ENCODE measurements at regions of chr10 and their contacts with region 1.

Region 1: GRCh38 chr10:132637477-132638129 is 100.0 kb downstream of the INPP5A start:
- DNase-seq: peak; percentile 5 to 21
- ATAC-seq: peak; percentile 63 to 85 (median 70)
- H3K4me3 ChIP-seq: no peak overlapping the region
- H3K27ac ChIP-seq: no peak overlapping the region
- H3K4me1 ChIP-seq: peaks cover 30% of the 10 kb centered on the region
- H3K27me3 ChIP-seq: no peaks in the 10 kb centered on the region
- CTCF ChIP-seq: peak; percentile 74

Region 2: DNA sequence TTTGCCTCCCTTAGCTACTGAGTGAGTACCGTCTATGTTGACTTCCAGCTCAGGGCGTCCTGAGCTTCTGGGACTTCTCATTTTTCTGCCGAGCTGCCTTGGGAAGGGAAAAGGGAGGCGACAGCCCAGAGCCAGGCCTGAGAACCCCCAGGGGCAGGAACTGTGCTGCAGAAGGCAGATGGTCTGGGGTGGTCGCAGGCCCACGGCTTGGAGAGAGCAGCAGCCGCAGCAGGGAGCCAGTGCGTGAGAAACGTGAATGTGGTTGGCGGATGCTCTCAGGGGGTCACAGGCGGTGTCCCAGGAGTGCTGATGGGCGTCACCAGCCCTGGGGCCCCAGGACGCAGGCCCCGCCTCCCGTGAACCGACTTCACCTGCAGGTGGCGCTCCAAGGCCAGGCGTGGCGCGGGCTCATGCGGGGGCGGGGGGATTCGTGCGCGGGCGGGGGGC is 249.8 kb before region 1 on chr10:
- intact Hi-C with region 1: loop called (anchors 5 to 10 kb)
- DNase-seq: peak; percentile 75 to 85
- ATAC-seq: peak; percentile 52 to 86 (median 74)
- H3K4me3 ChIP-seq: no peak overlapping the region
- H3K27ac ChIP-seq: no peak overlapping the region
- H3K4me1 ChIP-seq: peaks cover 5% of the 10 kb centered on the region
- H3K27me3 ChIP-seq: no peaks in the 10 kb centered on the region
- CTCF ChIP-seq: peak; percentile 64

Region 3: DNA sequence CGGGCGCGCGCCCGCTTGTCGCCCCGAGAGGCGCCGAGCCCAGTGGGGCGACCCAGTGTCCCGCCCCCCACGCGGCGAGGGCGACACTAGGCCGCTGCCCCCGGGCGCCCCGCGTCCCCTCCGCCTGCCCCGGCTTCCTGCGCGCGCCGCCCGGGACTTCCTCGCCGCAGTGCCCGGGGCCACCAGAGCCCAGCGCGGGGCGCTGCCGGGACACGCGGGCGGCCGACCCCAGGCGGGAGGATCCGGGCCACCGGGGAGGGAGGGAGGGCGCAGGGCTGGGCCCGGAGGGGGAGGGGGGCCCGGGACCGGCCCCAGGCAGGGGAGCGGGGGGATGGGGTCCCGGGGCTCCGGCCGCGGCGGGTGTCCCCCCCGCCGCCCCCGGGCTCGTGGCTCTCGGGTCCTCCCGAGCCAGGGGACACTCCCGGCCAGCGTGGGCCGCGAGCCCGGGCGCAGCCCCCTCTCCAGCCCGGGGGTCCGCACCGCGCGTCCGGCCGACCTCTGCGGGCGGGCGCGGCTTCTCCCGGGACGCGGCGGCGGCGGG is 241.0 kb before region 1 on chr10:
- intact Hi-C with region 1: loop called (anchors 5 to 10 kb)
- DNase-seq: peak; percentile 81 to 89
- ATAC-seq: peak; percentile 59 to 68 (median 66)
- H3K4me3 ChIP-seq: peak overlapping the region; percentile 75
- H3K27ac ChIP-seq: peak overlapping the region; percentile 91
- H3K4me1 ChIP-seq: peaks cover 45% of the 10 kb centered on the region
- H3K27me3 ChIP-seq: no peaks in the 10 kb centered on the region
- CTCF ChIP-seq: peak; percentile 38

Region 4: GRCh38 chr10:132458593-132459300 is 178.9 kb before region 1 on chr10:
- intact Hi-C with region 1: loop called (anchors 1 to 2 kb)
- DNase-seq: peak; percentile 62 to 81
- ATAC-seq: peak; percentile 78 to 86 (median 80)
- H3K4me3 ChIP-seq: no peak overlapping the region
- H3K27ac ChIP-seq: no peak overlapping the region
- H3K4me1 ChIP-seq: peaks cover 10% of the 10 kb centered on the region
- H3K27me3 ChIP-seq: peaks cover 0 to 4% (median 0%) of the 10 kb centered on the region in 3 donors
- CTCF ChIP-seq: peak; percentile 93

Region 5: DNA sequence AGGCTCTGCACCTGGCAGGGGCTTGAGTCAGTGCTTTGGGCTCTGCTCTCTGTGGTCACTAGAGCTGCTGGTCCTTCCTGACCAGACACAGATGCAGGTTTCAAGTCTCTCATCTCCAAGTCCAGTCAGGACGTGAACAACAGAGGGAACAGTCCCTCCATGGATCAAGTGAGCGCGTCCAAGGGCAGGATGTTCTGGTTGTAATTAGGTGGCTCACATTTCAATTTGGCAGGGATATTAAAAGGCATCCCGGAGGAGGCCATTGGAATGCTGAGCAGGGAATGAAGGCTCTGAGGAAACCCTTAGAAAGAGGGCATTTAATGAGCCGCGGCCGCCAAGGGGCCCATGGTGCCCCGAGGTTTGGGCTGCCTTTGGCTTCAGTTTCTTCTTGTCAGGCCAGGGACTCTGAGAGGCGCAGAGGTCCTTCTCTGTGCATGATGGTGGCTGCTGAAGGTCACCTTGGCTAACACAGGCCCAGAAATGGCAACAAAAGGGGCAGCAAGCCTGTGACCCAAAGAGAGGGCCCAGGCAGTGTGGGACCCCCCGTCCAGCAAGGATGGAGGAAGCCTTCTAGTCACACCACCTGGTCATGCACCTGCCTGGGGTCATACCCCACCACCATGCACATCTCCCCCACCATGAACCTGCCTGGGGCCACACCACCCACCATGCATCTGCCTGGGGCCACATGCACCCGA is 130.7 kb before region 1 on chr10:
- intact Hi-C with region 1: loop called (anchors 1 to 10 kb)
- DNase-seq: peak in 1 of 2 donors; percentile 77
- ATAC-seq: peak; percentile 28 to 79 (median 63)
- H3K4me3 ChIP-seq: no peak overlapping the region
- H3K27ac ChIP-seq: peak overlapping the region; percentile 23
- H3K4me1 ChIP-seq: peaks cover 18% of the 10 kb centered on the region
- H3K27me3 ChIP-seq: no peaks in the 10 kb centered on the region
- CTCF ChIP-seq: no peak

Region 6: GRCh38 chr10:132516771-132517725 is 120.6 kb before region 1 on chr10:
- intact Hi-C with region 1: loop called in 1 of 2 experiments (anchors 10 kb)
- DNase-seq: peak; percentile 94 to 97
- ATAC-seq: peak; percentile 90 to 96 (median 92)
- H3K4me3 ChIP-seq: peak overlapping the region; percentile 53
- H3K27ac ChIP-seq: peak overlapping the region; percentile 89
- H3K4me1 ChIP-seq: peaks cover 47% of the 10 kb centered on the region
- H3K27me3 ChIP-seq: no peaks in the 10 kb centered on the region
- CTCF ChIP-seq: no peak

Region 7: GRCh38 chr10:132536971-132537712 is 100.5 kb before region 1 on chr10:
- intact Hi-C with region 1: loop called in 1 of 2 experiments (anchors 5 kb)
- DNase-seq: peak; percentile 100
- ATAC-seq: peak; percentile 89 to 95 (median 91)
- H3K4me3 ChIP-seq: peak overlapping the region; percentile 75
- H3K27ac ChIP-seq: peak overlapping the region; percentile 80
- H3K4me1 ChIP-seq: peaks cover 50% of the 10 kb centered on the region
- H3K27me3 ChIP-seq: no peaks in the 10 kb centered on the region
- CTCF ChIP-seq: peak; percentile 31

Measured in psoas muscle (tissue), 8 donors.